ENCODE measurements at regions of chr18 and their contacts with region 1.

Region 1: DNA sequence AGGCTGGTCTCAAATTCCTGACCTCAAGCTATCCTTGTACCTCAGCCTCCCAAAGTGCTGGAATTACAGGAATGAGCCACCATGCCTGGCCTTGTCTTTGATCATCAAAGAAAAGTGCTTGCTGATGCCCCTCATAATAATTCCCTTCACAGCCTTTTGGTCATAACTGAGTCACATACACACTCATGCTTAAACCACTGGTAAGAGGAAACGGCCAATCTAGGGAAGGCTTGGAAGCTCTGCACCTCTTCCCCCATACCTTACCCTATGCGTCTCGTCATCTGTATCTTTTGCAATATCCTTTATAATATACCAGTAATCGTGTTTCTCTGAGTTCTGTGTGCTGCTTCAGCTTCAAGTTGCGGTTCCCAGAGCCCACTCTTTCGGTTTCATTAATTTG is 4.8 kb upstream of the RNF138 start:
- DNase-seq: no peak
- H3K4me3 ChIP-seq: no peak overlapping the region
- H3K27ac ChIP-seq: no peak overlapping the region
- H3K4me1 ChIP-seq: peaks cover 0 to 9% of the 10 kb centered on the region in 2 donors
- H3K27me3 ChIP-seq: no peaks in the 10 kb centered on the region
- CTCF ChIP-seq: no peak
- POLR2A ChIP-seq: no peak

Region 2: DNA sequence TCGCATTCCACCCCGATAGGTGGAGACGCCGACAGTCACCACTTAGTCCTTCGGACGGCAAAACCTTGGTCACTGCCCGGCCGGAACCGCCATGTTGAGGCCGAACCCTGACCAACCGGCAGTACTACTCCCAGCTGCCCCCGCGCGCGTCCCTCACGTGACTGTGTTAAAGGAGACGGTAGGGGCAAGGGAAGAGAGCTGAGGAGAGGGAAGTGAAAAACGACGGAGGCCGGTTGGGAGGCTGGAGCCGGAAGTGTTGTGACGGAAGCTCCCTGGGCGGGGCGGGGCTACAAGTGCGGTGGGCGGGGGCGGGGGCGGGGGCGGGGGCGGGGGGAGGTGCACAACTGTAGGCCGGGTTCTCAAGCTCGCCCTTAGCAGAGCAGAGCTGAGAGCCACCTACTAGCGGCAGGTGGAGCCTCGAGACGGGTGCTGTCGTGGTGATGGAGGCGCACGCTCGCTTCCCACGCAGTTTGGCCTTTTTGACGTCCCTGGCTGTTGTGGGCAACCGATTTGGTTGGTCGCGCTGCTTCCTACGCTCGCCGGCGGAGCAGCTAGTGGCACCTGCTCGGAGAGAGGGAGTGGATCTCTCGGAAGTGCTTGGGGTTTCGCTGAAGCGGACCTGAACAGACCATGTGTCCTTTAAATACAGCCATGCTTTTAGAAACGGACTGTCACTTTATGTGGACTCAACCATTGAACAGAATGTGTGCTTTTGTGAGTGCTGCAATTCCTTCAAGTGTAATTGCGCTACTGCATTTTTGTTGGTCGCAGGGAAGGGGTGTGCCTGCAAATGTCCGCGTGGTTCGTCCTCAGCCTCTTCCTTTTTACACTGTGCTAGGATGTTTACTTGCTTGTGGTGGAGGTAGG is 143.6 kb before region 1 on chr18 and contains the start of gene TRAPPC8:
- intact Hi-C with region 1: loop called (anchors 10 kb)
- DNase-seq: peak; percentile 99
- H3K4me3 ChIP-seq: peak within 1 kb of the TSS; percentile 51 to 87 (median 62)
- H3K27ac ChIP-seq: peak within 1 kb of the TSS; percentile 87 to 94 (median 90)
- H3K4me1 ChIP-seq: peaks cover 13 to 26% of the 10 kb centered on the region in 2 donors
- H3K27me3 ChIP-seq: no peaks in the 10 kb centered on the region
- CTCF ChIP-seq: peak in 1 of 6 experiments; percentile 16
- POLR2A ChIP-seq: peak in 1 of 2 donors; percentile 77
- total RNA-seq, gene TRAPPC8: 45.9 to 96.8 (median 61.8) TPM